ENCODE measurements at regions of chr15 and their contacts with region 1.

Region 1: GRCh38 chr15:92655178-92655995 is at the start of gene FAM174B:
- DNase-seq: peak in 1 of 2 experiments; percentile 51
- H3K4me3 ChIP-seq: peak within 1 kb of the TSS; percentile 55
- H3K27ac ChIP-seq: peak within 1 kb of the TSS; percentile 85
- H3K4me1 ChIP-seq: peaks cover 55% of the 10 kb centered on the region
- H3K27me3 ChIP-seq: no peaks in the 10 kb centered on the region
- CTCF ChIP-seq: no peak
- total RNA-seq, gene FAM174B: 77.5 and 90.3 TPM in 2 replicates

Region 2: GRCh38 chr15:91867581-91868026 is 787.8 kb before region 1 on chr15:
- CTCF ChIA-PET with region 1: no interaction called
- POLR2A ChIA-PET with region 1: interaction called, 12 read pairs
- intact Hi-C with region 1: no loop called
- DNase-seq: peak; percentile 93 to 95
- H3K4me3 ChIP-seq: peak overlapping the region; percentile 43; the same call in 1 of the 2 replicates
- H3K27ac ChIP-seq: peak overlapping the region; percentile 95
- H3K4me1 ChIP-seq: peaks cover 57% of the 10 kb centered on the region
- H3K27me3 ChIP-seq: no peaks in the 10 kb centered on the region
- CTCF ChIP-seq: no peak

Region 3: GRCh38 chr15:92617549-92618520 is 37.6 kb before region 1 on chr15:
- CTCF ChIA-PET with region 1: no interaction called
- POLR2A ChIA-PET with region 1: no interaction called
- intact Hi-C with region 1: loop called (anchors 2 kb)
- DNase-seq: peak; percentile 40 to 57
- H3K4me3 ChIP-seq: no peak overlapping the region
- H3K27ac ChIP-seq: 0 out of 2 replicates have a peak overlapping the region, but pooled peaks have one; percentile 11
- H3K4me1 ChIP-seq: no peaks in the 10 kb centered on the region; the same call in 1 of the 2 replicates
- H3K27me3 ChIP-seq: no peaks in the 10 kb centered on the region
- CTCF ChIP-seq: no peak